Lower leg skin (tissue), 4 donors: ENCODE measurements at regions of chr12 and their contacts with region 1.

Region 1: DNA sequence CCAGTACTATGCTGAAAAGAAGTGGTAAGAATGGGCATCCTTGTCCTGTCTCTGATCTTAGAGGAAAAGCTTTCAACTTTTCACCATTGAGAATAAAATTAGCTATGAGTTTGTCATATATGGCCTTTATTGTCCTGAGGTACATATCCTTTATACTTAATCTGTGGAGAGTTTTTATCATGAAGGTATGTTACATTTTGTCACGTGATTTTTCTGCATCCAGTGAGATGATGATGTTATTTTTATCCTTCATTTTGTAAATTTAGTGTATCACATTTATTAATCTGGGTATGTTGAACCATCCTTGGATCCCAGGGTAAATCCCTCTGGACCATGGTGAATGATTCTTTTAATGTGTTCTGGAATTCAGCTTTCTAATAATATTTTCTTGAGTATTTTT is 225.0 kb downstream of the PLCZ1 start:
- DNase-seq: no peak
- H3K4me3 ChIP-seq: no peak overlapping the region
- CTCF ChIP-seq: no peak
- POLR2A ChIP-seq: no peak

Region 2: DNA sequence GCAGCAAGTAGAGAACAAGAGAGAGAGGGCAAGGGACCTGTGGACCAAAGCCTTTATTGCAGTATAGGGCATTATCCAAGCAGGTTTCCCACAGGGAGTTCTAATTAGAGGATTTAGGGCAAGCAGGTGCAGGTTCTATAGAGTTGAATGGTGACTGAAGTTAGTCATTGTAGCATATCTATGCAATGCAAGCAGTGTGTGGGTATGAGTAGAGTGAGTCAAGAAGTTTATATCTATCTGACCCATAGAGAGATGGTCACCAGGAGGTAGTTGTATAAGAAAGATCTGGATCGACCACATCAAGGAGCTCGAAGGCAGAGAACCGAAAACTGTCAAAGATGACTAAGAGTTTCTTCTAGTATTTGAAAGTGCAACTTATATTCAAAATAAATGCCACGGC is 57.7 kb after region 1 on chr12:
- intact Hi-C with region 1: loop called (anchors 2 kb)
- DNase-seq: no peak
- H3K4me3 ChIP-seq: no peak overlapping the region
- CTCF ChIP-seq: no peak
- POLR2A ChIP-seq: no peak